ENCODE measurements at regions of chr10 and their contacts with region 1.

Region 1: GRCh38 chr10:116688241-116688711 is 54.1 kb downstream of the HSPA12A start:
- DNase-seq: no peak
- ATAC-seq: peak; percentile 72 to 83

Region 2: DNA sequence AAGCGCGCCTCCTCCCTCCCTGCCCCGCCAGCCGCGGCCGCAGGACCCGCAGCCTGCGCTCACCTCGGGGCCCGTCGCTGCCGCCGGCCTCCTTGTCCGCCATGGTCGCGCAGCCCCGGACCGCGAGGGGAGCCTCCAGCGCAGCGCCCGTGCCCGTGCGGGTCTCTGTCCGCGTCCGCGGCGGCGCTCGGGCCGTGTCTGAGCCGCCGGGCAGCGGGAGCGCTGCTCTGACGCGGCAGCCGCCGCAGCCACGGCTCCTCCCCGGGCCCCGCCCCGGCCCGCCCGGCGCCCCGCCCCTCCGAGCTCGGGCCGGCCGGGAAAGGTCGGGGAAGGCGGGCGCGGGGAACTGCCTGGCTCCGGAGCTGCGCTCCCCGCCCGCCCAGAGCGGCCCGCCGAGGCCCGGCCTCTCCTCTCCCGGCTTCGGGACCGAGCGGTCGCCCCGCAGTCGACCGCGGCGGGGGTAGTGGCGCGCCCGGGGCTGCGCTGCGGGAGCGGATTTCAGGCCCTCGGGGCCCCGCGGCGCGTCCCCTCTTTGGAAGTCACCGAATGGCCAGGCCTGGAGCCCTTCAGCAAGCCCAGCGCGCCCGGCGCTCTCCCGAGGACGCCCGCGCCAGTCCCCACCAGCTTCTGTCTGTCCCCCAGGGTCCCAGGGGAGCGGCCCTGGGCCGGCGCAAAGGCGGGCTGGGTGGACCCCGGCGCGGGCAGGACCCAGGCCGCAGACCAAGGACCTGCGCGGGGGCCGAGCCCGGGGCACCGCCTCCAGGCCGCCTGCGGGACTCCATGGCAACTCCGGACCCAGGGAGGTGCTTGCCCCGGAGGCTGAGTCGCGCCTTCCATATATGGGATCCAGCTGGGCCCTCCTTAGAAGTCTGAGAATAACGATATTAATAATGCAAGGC is 54.3 kb after region 1 on chr10 and contains the start of gene HSPA12A:
- intact Hi-C with region 1: loop called in 1 of 2 experiments (anchors 5 kb)
- DNase-seq: peak; percentile 84
- ATAC-seq: peak; percentile 95 to 96
- total RNA-seq, gene HSPA12A: 16.6 to 23.4 TPM

Region 3: GRCh38 chr10:116787893-116788665 is 99.8 kb after region 1 on chr10:
- intact Hi-C with region 1: loop called in 1 of 2 experiments (anchors 5 kb)
- DNase-seq: peak; percentile 82
- ATAC-seq: peak; percentile 87 to 90

Region 4: GRCh38 chr10:117078168-117078837 is 390.0 kb after region 1 on chr10:
- intact Hi-C with region 1: no loop called
- DNase-seq: no peak
- ATAC-seq: no peak

Region 5: DNA sequence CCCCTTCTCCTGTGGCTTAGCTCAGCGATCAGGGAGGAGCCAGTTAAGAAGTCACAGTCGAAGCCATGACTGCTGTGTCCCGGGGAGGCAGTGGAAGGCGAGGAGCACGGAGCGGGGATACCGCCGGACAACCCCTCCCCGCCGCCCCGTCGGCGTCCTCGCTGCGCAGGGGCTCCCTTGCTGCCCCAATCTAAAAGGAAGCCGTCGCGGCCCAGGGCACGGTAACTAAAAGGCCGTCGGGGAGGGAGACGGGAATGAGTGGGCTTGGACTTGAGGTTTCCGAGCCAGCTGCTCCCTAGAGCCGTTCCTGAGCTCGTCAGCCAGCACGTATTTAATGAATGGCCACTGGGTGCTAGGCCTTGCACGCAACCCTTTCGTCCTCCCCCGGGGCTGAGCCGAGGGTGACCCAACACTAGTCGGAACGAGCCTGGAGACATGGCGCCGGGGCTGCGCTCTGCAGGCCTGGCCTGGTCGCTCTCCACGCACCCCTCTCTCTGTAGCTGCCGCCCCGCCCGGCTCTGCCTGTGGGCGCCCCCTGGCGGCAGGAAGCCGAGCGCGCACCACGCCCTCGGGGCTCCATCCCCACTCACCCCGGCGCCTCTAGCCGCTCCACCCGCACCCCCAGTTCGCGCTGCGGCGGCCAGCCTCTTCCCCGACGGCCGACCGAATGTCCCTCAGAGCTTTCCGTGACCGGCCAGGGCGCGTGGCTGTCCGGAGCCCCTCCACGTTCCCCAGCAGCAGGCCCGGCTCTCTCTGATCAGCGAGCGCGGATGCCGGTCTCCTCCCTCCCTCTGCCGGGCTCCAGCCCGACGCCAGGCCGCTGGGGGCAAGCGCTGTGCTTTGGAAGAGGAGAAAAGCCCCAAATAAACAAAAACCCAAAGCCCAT is 479.8 kb after region 1 on chr10:
- intact Hi-C with region 1: loop called in 1 of 2 experiments (anchors 10 kb)
- DNase-seq: peak; percentile 60
- ATAC-seq: peak; percentile 86 to 95

Region 6: DNA sequence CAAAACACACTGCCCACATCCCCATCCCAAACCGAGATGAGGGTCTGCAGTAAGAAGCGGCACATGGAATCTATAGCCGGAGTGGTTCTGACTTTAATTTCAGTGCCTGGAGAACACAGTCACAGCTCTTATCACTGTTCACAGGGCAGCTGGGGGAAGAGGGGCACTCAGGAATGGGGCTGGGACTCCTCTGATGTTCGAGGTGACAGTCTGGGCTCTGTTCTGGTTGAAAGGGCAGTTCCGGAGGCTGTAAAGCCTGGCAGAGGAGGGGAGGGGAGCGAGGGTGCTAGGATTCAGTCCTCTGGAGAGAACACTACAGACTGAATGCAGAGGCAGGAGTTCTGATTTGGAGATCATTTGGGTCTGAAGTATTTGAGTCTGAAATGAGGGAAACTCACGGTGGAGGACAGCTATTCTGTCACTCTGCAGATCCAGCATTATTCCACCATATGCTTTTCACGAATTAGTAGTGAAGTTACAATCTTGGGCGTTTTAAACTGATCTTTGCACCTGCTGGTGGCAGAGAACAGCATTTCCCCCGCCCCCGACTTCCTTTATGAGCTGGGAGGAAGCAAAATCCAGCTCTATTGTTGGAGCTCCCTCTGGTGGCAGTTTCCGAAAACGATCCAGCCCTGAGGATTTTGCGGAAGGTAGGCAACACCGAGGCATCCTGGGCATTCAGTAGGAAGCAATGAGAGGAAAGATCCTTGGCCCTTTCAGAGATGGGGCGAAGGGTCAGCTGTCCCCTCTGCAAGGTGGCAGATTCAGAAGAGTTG is 486.4 kb after region 1 on chr10:
- intact Hi-C with region 1: loop called (anchors 5 to 10 kb)
- DNase-seq: peak; percentile 74
- ATAC-seq: peak; percentile 86 to 92